HCT116 (cell line): ENCODE measurements at regions of chr2 and their contacts with region 1.

Region 1: DNA sequence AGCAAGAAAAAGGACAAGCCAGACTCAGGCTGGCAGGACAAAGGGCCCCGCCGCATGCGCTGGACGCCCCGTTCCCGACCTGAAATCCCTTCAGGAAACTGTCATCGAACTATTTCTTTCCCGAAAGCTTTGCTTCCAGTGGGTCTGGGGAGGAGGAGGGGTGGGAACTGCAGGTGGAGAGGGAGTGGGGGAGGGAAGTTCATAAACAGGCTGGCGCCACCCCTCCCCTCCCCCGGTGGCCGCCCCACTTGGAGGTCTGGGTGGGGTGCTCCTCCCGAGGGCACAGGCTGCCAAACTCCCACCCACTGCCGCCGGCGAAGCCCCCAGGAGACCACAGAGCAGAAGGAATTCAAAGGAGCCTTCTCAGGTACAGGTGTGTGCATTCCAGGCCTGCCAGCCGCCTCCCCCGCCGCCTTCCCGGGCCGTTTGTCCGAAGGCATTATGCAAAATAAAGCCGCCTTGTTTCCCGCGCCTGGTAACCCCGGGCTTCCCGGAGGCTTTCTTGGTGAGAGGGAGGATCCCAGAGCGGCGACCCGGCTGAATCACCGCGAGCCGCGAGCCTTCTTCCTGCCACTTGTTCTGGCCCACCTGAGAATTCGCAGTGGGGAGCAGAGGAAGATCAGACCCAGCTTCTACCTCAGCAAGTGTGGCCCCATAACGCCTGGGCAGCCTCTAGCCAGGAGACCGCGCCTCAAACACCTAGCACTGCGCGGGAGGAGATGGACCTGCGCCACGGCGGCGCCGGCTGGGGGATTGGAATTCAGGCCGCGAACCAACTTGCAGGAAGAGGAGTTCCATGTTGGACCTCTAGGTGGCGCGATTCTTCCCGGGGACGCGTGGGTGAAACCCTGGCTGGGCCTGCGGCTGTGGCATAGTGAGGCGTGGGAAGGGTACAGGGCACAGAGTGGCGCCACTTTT is 101.9 kb downstream of the FOXI3 start:
- DNase-seq: peak; percentile 65
- ATAC-seq: peak; percentile 79
- H3K4me3 ChIP-seq: peak overlapping the region; percentile 45 to 60
- H3K27ac ChIP-seq: peak overlapping the region; percentile 61
- H3K4me1 ChIP-seq: peaks cover 20 to 32% of the 10 kb centered on the region in 2 experiments
- H3K27me3 ChIP-seq: no peaks in the 10 kb centered on the region; the same call in 1 of the 2 replicates
- CTCF ChIP-seq: peak; percentile 81 to 90 (median 89)
- POLR2A ChIP-seq: no peak
- RAD21 ChIP-seq: peak; percentile 57

Region 2: DNA sequence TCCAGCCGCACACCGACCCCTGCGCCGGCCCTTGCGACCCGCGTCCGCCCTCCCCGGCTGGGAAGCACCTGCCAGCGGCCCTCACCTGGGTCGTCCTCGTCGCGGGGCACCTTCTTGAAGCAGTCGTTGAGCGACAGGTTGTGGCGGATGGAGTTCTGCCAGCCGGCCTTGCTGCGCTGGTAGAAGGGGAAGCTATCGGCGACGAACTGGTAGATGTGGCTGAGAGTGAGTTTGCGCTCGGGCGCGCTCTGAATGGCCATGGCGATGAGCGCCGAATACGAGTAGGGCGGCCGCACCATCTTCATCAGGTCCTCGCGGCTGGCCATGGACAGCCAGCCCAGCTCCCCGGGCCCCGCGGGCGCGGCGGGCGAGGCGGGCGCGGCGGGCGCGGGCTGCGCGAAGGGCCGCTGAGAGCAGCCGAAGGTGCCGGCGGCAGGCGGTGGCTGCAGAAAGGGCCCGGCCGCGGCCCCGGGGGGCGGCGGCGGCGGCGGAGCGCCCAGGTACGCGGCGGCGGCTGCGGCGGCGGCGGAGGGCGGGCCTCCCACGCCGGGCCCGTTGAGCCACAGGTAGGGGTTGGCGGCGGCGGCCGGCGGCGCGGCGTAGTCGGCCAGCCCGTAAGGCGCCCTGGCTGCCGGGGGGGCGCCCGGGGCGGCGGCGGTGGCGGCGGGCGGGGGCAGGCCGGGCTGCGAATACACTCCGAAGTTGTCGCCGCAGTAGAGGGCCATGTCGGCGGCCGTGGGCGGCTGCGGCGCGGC is 101.4 kb after region 1 on chr2:
- CTCF ChIA-PET with region 1: no interaction called
- POLR2A ChIA-PET with region 1: no interaction called
- RAD21 ChIA-PET with region 1: no interaction called
- intact Hi-C with region 1: loop called (anchors 1 kb)
- DNase-seq: no peak
- ATAC-seq: no peak
- H3K4me3 ChIP-seq: no peak overlapping the region
- H3K27ac ChIP-seq: no peak overlapping the region
- H3K4me1 ChIP-seq: no peaks in the 10 kb centered on the region; a peak in 1 of 4 replicates
- H3K27me3 ChIP-seq: no peaks in the 10 kb centered on the region
- CTCF ChIP-seq: no peak
- POLR2A ChIP-seq: no peak
- RAD21 ChIP-seq: no peak

Region 3: GRCh38 chr2:88845772-88846661 is 495.4 kb after region 1 on chr2:
- CTCF ChIA-PET with region 1: no interaction called
- POLR2A ChIA-PET with region 1: no interaction called
- RAD21 ChIA-PET with region 1: no interaction called
- intact Hi-C with region 1: no loop called
- DNase-seq: no peak
- ATAC-seq: no peak
- H3K4me3 ChIP-seq: no peak overlapping the region
- H3K27ac ChIP-seq: no peak overlapping the region
- H3K4me1 ChIP-seq: no peaks in the 10 kb centered on the region
- H3K27me3 ChIP-seq: peaks cover 62% of the 10 kb centered on the region
- CTCF ChIP-seq: no peak
- POLR2A ChIP-seq: no peak
- RAD21 ChIP-seq: no peak